ENCODE measurements at regions of chr3 and their contacts with region 1.

Region 1: DNA sequence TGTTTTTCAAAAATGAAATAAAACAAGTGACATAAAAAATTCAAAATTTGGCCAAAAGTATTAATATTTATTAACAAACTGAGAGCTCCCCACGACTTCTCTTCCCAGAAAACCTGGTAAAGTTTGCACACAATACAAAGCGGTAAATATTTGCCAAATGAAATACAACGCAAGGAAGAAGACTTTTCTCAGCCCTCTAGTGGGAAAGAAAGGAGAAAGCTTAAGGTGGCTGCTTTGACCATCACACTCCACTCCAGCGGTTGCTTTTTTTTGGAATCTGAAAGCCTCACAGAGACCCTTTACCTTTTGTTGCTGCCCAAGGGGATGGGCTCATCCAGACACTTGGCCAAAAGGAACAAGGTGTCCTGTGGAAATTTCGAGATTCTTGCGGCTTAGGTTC is 1.1 kb upstream of the GK5 start:
- DNase-seq: no peak
- H3K4me3 Mint-ChIP-seq: peak overlapping the region; percentile 29
- H3K27ac Mint-ChIP-seq: no peak overlapping the region
- H3K4me1 Mint-ChIP-seq: peaks cover 12% of the 10 kb centered on the region
- H3K27me3 Mint-ChIP-seq: no peaks in the 10 kb centered on the region

Region 2: GRCh38 chr3:142270407-142270806 is 43.9 kb after region 1 on chr3:
- CTCF ChIA-PET with region 1: no interaction called
- POLR2A ChIA-PET with region 1: no interaction called
- intact Hi-C with region 1: loop called (anchors 2 kb)
- DNase-seq: peak; percentile 36
- H3K4me3 Mint-ChIP-seq: no peak overlapping the region
- H3K27ac Mint-ChIP-seq: no peak overlapping the region
- H3K4me1 Mint-ChIP-seq: peaks cover 6% of the 10 kb centered on the region
- H3K27me3 Mint-ChIP-seq: no peaks in the 10 kb centered on the region